PC-9 (cell line): ENCODE measurements at regions of chr2 and their contacts with region 1.

Region 1: GRCh38 chr2:85409845-85410583 is at the start of gene CAPG:
- DNase-seq: peak; percentile 72 to 89
- H3K4me3 ChIP-seq: peak within 1 kb of the TSS; percentile 49
- H3K27ac ChIP-seq: peak within 1 kb of the TSS; percentile 88
- H3K4me1 ChIP-seq: peaks cover 56% of the 10 kb centered on the region
- H3K27me3 ChIP-seq: no peaks in the 10 kb centered on the region
- CTCF ChIP-seq: no peak
- total RNA-seq, gene CAPG: 417 and 428 TPM in 2 replicates

Region 2: DNA sequence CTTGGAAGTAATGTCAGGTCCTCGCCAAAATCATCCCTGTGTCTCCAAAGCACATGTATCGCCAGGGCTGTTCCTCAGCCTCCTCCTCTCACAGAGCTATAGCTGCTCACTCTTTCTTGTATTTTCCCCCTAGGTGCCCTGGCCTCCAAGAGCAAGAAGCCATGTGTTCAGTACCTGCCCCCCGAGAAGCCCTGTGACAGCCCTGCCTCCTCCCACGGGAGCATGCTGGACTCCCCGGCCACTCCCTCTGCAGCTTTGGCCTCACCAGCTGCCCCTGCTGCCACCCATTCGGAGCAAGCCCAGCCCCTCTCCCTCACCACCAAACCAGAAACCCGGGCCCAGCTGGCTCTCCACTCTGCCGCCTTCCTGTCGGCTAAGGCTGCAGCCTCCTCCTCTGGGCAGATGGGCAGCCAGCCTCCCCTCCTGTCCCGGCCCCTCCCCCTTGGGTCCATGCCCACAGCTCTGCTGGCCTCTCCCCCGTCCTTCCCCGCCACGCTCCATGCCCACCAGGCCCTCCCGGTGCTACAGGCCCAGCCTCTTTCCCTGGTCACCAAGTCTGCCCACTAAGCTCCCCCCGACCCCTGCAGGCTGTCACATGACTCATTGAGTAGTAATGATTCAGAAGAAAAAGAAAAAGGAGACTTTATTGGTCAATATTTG is 101.0 kb before region 1 on chr2:
- CTCF ChIA-PET with region 1: no interaction called
- POLR2A ChIA-PET with region 1: interaction called, 12 read pairs
- intact Hi-C with region 1: no loop called
- DNase-seq: no peak
- H3K4me3 ChIP-seq: no peak overlapping the region
- H3K27ac ChIP-seq: no peak overlapping the region
- H3K4me1 ChIP-seq: no peaks in the 10 kb centered on the region
- H3K27me3 ChIP-seq: no peaks in the 10 kb centered on the region
- CTCF ChIP-seq: no peak

Region 3: GRCh38 chr2:85354286-85355072 is 55.5 kb before region 1 on chr2 and contains the starts of genes ELMOD3 and RETSAT:
- CTCF ChIA-PET with region 1: interaction called, 6 read pairs
- POLR2A ChIA-PET with region 1: no interaction called
- intact Hi-C with region 1: loop called (anchors 2 kb)
- DNase-seq: peak; percentile 96
- H3K4me3 ChIP-seq: peak within 1 kb of the TSS; percentile 87
- H3K27ac ChIP-seq: peak within 1 kb of the TSS; percentile 62
- H3K4me1 ChIP-seq: peaks cover 16% of the 10 kb centered on the region
- H3K27me3 ChIP-seq: no peaks in the 10 kb centered on the region
- CTCF ChIP-seq: no peak
- total RNA-seq, gene ELMOD3: 16.4 and 18.1 TPM in 2 replicates
- total RNA-seq, gene RETSAT: 52.1 and 57.8 TPM in 2 replicates

Region 4: DNA sequence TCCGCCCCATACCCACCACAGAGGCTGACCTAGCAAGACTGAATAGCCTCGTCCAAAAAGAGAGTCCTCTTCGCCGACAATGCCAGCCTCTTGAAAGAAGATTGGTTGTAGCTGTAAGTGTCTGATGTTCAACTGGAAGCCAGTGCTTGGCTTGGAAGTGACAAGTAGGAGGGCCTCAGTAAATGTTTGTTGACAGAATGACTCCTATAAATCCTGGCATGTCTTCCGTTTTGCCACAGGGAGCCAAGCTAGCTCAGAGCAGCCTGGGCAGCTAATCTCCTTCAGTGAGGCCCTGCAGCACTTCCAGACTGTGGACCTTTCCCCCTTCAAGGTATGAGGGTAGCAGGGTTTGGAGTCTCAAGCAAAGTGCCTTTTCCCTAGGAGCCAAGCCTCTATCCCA is 40.5 kb before region 1 on chr2:
- CTCF ChIA-PET with region 1: no interaction called
- POLR2A ChIA-PET with region 1: no interaction called
- intact Hi-C with region 1: no loop called
- DNase-seq: no peak
- H3K4me3 ChIP-seq: no peak overlapping the region
- H3K27ac ChIP-seq: no peak overlapping the region
- H3K4me1 ChIP-seq: no peaks in the 10 kb centered on the region
- H3K27me3 ChIP-seq: no peaks in the 10 kb centered on the region
- CTCF ChIP-seq: no peak

Region 5: DNA sequence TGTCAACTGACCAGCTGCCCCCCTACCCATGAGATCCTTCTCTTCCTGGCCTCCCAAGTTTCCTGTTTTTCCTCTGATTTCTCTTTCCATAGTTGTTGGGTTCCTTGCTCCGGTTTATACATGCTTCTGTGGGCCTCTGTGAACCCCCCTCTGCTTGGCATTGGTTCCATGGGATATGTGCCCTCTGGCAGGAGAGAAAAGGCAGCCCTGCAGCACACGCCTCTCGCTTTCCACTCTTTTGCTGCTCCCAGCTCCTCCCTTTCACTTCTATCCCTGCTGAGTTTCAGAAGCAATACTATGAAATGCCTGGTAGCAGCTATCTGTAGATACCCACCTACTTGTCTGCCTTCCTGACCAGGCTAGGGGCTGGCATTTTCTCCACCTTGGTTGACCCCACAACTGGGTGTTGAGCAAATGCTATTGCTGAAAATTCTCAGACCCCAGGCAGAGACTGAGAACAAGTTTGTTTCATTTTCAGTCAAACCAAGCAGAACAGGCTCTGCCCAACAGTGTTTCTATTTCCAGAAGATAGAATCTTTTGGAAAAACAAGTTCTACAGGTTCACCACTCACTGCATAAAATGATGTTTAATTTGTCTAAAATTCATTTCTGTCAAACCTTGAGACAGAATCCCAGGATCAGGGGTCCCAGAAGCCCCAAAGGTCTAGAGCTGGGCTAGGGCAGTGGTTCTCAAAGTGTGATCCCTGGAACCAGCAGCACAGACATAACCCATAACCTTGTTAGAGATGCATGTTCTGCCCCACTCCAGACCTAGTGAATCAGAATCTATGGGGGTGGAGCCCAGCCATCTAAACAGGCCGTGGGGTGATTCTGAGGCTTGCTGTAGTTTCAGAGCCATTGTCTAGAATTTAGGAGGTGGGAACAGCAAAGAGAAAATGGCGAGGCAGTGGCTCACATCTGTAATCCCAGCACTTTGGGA is 13.2 kb before region 1 on chr2:
- CTCF ChIA-PET with region 1: no interaction called
- POLR2A ChIA-PET with region 1: no interaction called
- intact Hi-C with region 1: loop called (anchors 1 kb)
- DNase-seq: peak; percentile 45 to 76
- H3K4me3 ChIP-seq: peak overlapping the region; percentile 44; the same call in 1 of the 2 replicates
- H3K27ac ChIP-seq: peak overlapping the region; percentile 75
- H3K4me1 ChIP-seq: peaks cover 32% of the 10 kb centered on the region
- H3K27me3 ChIP-seq: no peaks in the 10 kb centered on the region
- CTCF ChIP-seq: no peak

Region 6: GRCh38 chr2:85444629-85445028 is 34.6 kb after region 1 on chr2:
- CTCF ChIA-PET with region 1: no interaction called
- POLR2A ChIA-PET with region 1: no interaction called
- intact Hi-C with region 1: no loop called
- DNase-seq: no peak
- H3K4me3 ChIP-seq: no peak overlapping the region
- H3K27ac ChIP-seq: no peak overlapping the region
- H3K4me1 ChIP-seq: peaks cover 25% of the 10 kb centered on the region
- H3K27me3 ChIP-seq: no peaks in the 10 kb centered on the region
- CTCF ChIP-seq: no peak

Region 7: DNA sequence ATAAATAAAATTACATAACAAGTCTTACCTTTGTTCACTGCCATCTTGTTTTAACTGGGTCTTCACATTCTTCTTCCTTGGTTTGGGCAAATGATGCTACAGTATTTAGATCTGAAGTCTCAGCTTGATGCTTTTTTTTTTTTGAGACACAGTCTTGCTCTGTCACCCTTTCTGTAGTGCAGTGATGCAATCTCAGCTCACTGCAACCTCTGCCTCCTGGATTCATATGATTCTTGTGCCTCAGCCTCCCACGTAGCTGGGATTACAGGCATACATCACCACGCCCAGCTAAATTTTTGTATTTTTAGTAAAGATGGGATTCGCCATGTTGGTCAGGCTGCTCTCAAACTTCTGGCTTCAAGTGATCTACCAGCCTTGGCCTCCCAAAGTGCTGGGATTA is 75.8 kb after region 1 on chr2:
- CTCF ChIA-PET with region 1: no interaction called
- POLR2A ChIA-PET with region 1: interaction called, 15 read pairs
- intact Hi-C with region 1: no loop called
- DNase-seq: no peak
- H3K4me3 ChIP-seq: no peak overlapping the region
- H3K27ac ChIP-seq: no peak overlapping the region
- H3K4me1 ChIP-seq: no peaks in the 10 kb centered on the region
- H3K27me3 ChIP-seq: no peaks in the 10 kb centered on the region
- CTCF ChIP-seq: no peak

Region 8: DNA sequence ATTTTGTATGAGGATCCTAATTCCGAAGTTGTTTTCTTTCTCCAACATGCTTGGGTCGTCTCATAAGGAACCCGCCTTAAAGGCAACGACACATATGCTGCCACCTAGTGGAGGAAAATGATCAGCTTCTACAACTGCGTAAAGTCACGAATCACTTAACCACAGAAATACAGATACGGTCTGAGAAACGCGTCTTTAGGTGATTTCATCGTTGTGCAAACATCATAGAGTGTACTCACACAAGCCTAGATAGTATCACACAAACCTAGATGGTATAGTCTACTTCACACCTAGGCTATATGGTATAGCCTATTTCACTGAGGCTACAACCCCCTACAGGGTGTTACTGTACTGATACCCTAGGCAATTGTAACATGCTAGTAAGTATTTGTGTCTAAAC is 297.3 kb after region 1 on chr2:
- CTCF ChIA-PET with region 1: no interaction called
- POLR2A ChIA-PET with region 1: no interaction called
- intact Hi-C with region 1: loop called (anchors 5 kb)
- DNase-seq: peak; percentile 64 to 94
- H3K4me3 ChIP-seq: no peak overlapping the region
- H3K27ac ChIP-seq: peak overlapping the region; percentile 95
- H3K4me1 ChIP-seq: peaks cover 46% of the 10 kb centered on the region
- H3K27me3 ChIP-seq: no peaks in the 10 kb centered on the region
- CTCF ChIP-seq: peak; percentile 86